ENCODE measurements at regions of chr11 and their contacts with region 1.

Region 1: GRCh38 chr11:72793425-72794367 is at the start of gene STARD10:
- DNase-seq: peak; percentile 96 to 99 (median 98)
- ATAC-seq: peak; percentile 97
- H3K4me3 ChIP-seq: peak within 1 kb of the TSS; percentile 61
- H3K27ac ChIP-seq: peak within 1 kb of the TSS; percentile 95
- H3K4me1 ChIP-seq: peaks cover 6% of the 10 kb centered on the region
- H3K27me3 ChIP-seq: no peaks in the 10 kb centered on the region
- total RNA-seq, gene STARD10: 88.9 to 127 (median 106) TPM

Region 2: DNA sequence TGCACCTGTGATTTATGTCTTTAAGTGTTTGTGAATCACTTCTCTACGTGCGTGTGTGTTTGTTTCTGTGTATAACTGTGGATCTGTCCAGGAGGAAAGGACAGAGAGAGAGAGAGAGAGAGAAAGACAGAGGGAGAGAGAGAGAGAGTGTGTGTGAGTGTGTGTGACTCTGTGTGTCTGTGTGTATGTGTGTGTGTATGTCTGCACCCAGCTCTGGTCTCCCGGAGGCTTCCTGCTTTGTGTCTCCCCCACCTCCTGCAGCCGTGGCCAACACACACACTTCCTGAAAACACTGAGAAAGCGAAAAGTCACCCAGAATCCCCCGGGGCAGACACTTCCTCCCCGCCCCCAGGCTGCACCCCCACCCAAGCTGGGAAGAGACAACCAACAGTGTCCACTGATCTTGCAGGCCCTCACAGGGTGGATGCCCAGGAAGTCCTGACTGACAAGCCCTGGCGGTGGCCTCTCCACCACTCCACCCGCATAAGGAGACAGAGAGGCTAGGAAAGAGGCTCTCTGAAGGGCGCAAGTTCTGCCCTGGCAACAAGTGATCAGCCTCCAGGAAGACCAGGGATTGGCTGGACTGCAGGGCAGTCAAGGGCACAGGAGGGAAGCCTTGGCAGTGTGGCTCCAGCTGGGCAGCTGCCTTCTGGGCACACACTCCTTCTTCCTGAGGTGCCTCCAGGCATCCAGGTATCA is 71.5 kb before region 1 on chr11:
- intact Hi-C with region 1: loop called (anchors 2 to 5 kb)
- DNase-seq: peak; percentile 89 to 95 (median 94)
- ATAC-seq: peak; percentile 85 to 88
- H3K4me3 ChIP-seq: peak overlapping the region; percentile 53
- H3K27ac ChIP-seq: peak overlapping the region; percentile 99
- H3K4me1 ChIP-seq: peaks cover 20% of the 10 kb centered on the region
- H3K27me3 ChIP-seq: no peaks in the 10 kb centered on the region

Region 3: DNA sequence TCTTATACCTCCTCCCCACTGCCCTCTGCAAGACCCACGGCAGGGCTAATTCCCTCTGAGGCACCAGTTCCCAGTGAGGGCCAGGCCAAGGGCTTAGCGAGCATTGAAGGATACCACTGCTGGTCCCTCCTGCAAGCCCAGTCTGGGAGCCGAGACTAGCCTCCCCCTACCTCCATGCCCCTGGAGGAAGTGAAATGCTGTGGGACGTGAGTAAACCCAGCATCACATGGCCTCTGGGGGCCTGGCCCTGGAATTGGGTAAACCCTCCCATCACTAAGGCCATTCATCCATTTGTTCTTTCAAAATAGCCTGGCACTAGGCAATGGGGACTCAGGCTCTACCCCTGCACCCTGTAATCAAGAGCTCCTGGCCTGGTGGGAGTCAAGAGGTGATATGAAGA is 66.2 kb before region 1 on chr11:
- intact Hi-C with region 1: loop called (anchors 2 to 5 kb)
- DNase-seq: peak in 2 of 3 donors; percentile 33
- ATAC-seq: no peak
- H3K4me3 ChIP-seq: no peak overlapping the region
- H3K27ac ChIP-seq: no peak overlapping the region
- H3K4me1 ChIP-seq: peaks cover 7% of the 10 kb centered on the region
- H3K27me3 ChIP-seq: no peaks in the 10 kb centered on the region

Measured in right cardiac atrium (tissue), 5 donors.